ENCODE measurements at regions of chr19 and their contacts with region 1.

Region 1: GRCh38 chr19:16185123-16185767 is at the start of gene FAM32A:
- DNase-seq: peak; percentile 100
- H3K4me3 ChIP-seq: peak within 1 kb of the TSS; percentile 89 to 96 (median 92)
- H3K27ac ChIP-seq: peak within 1 kb of the TSS; percentile 86 to 92 (median 90)
- H3K4me1 ChIP-seq: peaks cover 12 to 37% (median 18%) of the 10 kb centered on the region in 4 donors
- H3K27me3 ChIP-seq: peaks cover 3% of the 10 kb centered on the region
- CTCF ChIP-seq: peak in 4 of 5 experiments; percentile 27 to 65 (median 46)
- EP300 ChIP-seq: no peak
- POLR2A ChIP-seq: peak; percentile 94
- total RNA-seq, gene FAM32A: 73.0 to 106 (median 88.6) TPM

Region 2: GRCh38 chr19:15629003-15629880 is 556.0 kb before region 1 on chr19:
- in situ Hi-C with region 1: loop called (anchors 10 to 25 kb)
- intact Hi-C with region 1: loop called (anchors 10 kb)
- DNase-seq: peak; percentile 92
- H3K4me3 ChIP-seq: peak overlapping the region in 1 of 4 donors; percentile 6
- H3K27ac ChIP-seq: no peak overlapping the region
- H3K4me1 ChIP-seq: peaks cover 0 to 4% (median 0%) of the 10 kb centered on the region in 4 donors
- H3K27me3 ChIP-seq: peaks cover 4% of the 10 kb centered on the region
- CTCF ChIP-seq: peak; percentile 97 to 99 (median 99)
- EP300 ChIP-seq: no peak
- POLR2A ChIP-seq: no peak

Region 3: DNA sequence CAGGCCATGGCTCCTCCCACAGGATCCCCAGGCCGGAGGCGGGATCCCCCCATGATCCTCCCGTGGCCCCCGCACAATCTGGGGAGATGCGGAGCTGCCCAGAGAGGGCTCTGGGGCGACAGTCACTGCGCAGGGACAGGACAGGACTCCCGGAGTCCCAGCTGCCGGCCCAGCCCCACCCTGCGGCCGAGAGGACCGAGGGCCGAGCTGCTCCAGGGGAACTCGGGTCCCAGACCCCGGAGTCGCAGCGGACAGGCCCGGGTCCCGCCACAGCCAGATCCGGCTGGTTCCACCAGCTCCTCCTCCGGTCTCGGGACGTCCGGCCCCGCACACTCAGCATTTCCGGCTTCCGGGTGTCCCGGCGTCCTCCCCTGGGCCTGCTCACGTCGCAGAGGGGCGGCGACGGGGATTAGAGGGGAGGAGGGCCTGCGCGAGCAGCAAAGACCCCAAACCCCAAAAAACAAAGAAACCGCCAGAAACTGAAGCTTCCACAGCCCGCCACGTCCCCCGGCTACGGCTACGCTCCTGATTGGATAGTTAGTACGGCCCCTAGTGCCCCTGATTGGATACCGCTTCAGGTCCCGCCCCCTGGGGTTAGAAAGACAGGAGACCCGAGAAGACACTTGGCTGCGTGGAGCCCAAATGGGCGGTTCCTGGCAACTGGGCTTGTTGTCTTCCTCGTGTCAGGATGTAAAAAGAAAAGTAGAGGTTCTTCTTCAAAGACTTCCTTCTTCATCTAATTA is 348.5 kb before region 1 on chr19:
- in situ Hi-C with region 1: loop called in 1 of 4 experiments (anchors 25 kb)
- intact Hi-C with region 1: no loop called
- DNase-seq: peak; percentile 97
- H3K4me3 ChIP-seq: peak overlapping the region; percentile 73 to 89 (median 82)
- H3K27ac ChIP-seq: peak overlapping the region; percentile 97 to 99 (median 98)
- H3K4me1 ChIP-seq: peaks cover 4 to 14% (median 10%) of the 10 kb centered on the region in 4 donors
- H3K27me3 ChIP-seq: no peaks in the 10 kb centered on the region
- CTCF ChIP-seq: no peak
- EP300 ChIP-seq: no peak
- POLR2A ChIP-seq: peak; percentile 91

Region 4: GRCh38 chr19:16041299-16041990 is 143.8 kb before region 1 on chr19:
- in situ Hi-C with region 1: loop called in 1 of 4 experiments (anchors 10 kb)
- intact Hi-C with region 1: loop called (anchors 5 kb)
- DNase-seq: peak; percentile 90
- H3K4me3 ChIP-seq: peak overlapping the region in 1 of 4 donors; percentile 23
- H3K27ac ChIP-seq: peak overlapping the region in 2 of 4 donors; percentile 30 to 35
- H3K4me1 ChIP-seq: peaks cover 0 to 15% (median 3%) of the 10 kb centered on the region in 4 donors
- H3K27me3 ChIP-seq: no peaks in the 10 kb centered on the region
- CTCF ChIP-seq: peak; percentile 98 to 99 (median 98)
- EP300 ChIP-seq: no peak
- POLR2A ChIP-seq: no peak

Region 5: DNA sequence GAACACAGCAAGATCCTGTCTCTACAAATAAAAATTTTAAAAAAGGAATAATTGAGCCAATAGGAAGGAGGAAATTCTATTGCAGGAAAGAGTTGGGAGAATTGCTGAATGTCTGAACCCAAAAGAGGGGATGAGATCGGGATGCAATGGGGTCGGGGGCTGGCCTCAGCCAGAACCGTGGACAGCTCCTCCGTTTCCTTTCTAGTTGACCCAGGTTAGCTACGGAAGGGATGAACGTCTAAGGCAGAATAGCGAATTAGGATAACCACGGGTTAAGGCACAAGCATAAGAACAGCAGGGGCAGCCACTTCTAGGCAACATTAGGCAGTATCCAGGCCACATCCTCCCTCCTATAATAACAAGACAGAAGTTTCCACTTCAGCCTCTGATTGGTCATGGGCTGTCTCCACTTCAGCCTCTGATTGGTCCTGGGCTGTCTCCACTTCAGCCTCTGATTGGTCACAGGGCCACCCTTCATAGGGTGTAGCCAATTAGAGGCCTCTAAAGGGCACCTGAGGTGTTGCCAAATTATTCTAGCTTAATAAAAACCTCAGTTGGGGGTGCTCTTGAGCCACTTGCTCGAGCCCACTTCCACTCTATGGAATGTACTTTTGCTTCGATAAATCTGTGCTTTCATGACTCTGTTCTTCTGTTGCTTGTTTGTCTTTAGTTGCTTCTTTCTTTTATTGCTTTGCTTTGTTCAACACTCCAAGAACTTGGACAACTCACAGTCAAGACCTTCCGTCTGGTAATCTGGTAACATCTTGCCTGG is 133.8 kb before region 1 on chr19:
- in situ Hi-C with region 1: loop called in 2 of 4 experiments (anchors 10 kb)
- intact Hi-C with region 1: no loop called
- DNase-seq: no peak
- H3K4me3 ChIP-seq: no peak overlapping the region
- H3K27ac ChIP-seq: no peak overlapping the region
- H3K4me1 ChIP-seq: no peaks in the 10 kb centered on the region
- H3K27me3 ChIP-seq: no peaks in the 10 kb centered on the region
- CTCF ChIP-seq: no peak
- EP300 ChIP-seq: no peak
- POLR2A ChIP-seq: no peak

Measured in transverse colon (tissue), 4 donors.